CD4-positive, alpha-beta T cell (primary cell): ENCODE measurements at regions of chr22 and their contacts with region 1.

Region 1: GRCh38 chr22:24175160-24175808 is 6.0 kb upstream of the SUSD2 start:
- DNase-seq: peak; percentile 41 to 79 (median 61)
- ATAC-seq: peak; percentile 68
- H3K4me3 ChIP-seq: no peak overlapping the region
- H3K4me3 Mint-ChIP-seq: no peak overlapping the region
- H3K27ac ChIP-seq: peak overlapping the region in 1 of 2 donors; percentile 21
- H3K27ac Mint-ChIP-seq: no peak overlapping the region
- H3K4me1 ChIP-seq: no peaks in the 10 kb centered on the region
- H3K4me1 Mint-ChIP-seq: no peaks in the 10 kb centered on the region
- H3K27me3 ChIP-seq: no peaks in the 10 kb centered on the region
- H3K27me3 Mint-ChIP-seq: no peaks in the 10 kb centered on the region
- CTCF ChIP-seq: peak; percentile 71

Region 2: DNA sequence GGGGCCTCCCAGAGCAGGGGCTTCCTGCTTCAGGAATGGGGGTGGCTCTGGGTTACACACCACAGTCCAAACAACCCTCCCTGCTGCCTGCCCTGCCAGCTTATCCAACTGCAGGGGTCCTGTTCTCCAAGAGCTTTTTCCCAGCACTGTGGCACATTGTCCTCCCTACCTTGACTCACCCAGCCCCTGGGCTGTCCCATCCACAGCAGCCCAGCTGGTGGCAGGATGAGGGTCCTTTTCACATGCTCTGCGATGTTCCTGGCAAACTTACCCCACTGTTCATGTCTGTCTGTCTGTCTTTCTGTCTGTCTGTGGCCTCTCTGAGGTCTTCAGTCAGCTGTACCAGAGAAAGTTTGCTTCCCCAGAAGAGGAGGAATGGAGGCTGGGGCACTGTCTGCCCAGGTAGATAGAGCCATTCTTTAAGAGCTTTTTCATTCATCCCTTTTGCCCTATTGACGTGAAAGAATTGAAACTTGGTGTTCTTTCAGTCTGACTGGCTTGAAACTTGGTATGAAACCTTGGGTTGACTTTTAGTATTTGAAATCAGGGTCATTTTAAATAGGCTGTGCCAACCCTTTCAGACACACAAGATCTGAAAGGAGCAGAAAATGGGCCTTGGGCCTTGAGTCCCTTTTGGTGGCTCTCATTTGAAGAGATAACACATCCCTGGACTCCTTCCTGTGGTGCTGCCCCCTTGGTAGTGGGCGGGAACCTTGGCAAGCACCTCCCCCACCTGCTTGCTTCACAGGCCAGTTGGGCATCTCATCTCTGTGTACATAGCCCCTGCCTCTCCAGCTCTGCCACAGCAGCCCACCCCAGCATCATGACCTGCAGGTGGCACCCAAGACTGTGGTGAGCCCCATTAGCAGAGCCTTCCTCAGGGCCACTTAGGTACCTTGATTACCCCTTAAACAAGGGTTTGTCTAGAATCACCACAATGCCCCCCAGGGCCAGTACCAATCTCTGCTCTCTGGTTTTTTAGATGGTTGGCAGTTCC is 68.6 kb before region 1 on chr22:
- CTCF ChIA-PET with region 1: interaction called, 12 read pairs
- POLR2A ChIA-PET with region 1: no interaction called
- intact Hi-C with region 1: loop called in 1 of 2 experiments (anchors 1 kb)
- DNase-seq: peak in 13 of 14 experiments; percentile 15 to 65 (median 40)
- ATAC-seq: peak; percentile 56
- H3K4me3 ChIP-seq: no peak overlapping the region
- H3K4me3 Mint-ChIP-seq: no peak overlapping the region
- H3K27ac ChIP-seq: no peak overlapping the region
- H3K27ac Mint-ChIP-seq: no peak overlapping the region
- H3K4me1 ChIP-seq: peaks cover 4% of the 10 kb centered on the region
- H3K4me1 Mint-ChIP-seq: no peaks in the 10 kb centered on the region
- H3K27me3 ChIP-seq: no peaks in the 10 kb centered on the region
- H3K27me3 Mint-ChIP-seq: no peaks in the 10 kb centered on the region
- CTCF ChIP-seq: peak; percentile 46

Region 3: DNA sequence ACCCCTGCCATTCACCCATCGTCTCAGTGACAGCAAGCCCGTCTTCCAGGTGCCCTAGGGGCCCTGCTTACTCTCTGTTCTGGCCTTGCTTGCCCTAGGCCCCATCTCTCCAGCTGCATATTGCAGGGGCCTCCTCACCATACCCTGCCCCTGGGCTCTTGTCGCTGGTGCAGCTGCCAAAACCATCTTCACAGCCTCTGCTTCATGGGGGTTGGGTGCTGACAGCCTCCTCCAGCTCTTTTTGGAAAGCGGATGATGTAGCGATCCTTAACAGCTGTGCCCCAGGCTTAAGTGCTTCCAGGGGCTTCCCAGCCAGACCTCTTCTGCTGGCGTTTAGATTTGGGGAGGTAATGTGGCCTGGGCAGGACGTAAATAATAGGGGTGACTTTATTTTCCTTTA is 55.2 kb before region 1 on chr22:
- CTCF ChIA-PET with region 1: no interaction called
- POLR2A ChIA-PET with region 1: no interaction called
- intact Hi-C with region 1: no loop called
- DNase-seq: no peak
- ATAC-seq: no peak
- H3K4me3 ChIP-seq: no peak overlapping the region
- H3K4me3 Mint-ChIP-seq: no peak overlapping the region
- H3K27ac ChIP-seq: no peak overlapping the region
- H3K27ac Mint-ChIP-seq: no peak overlapping the region
- H3K4me1 ChIP-seq: no peaks in the 10 kb centered on the region
- H3K4me1 Mint-ChIP-seq: no peaks in the 10 kb centered on the region
- H3K27me3 ChIP-seq: no peaks in the 10 kb centered on the region
- H3K27me3 Mint-ChIP-seq: no peaks in the 10 kb centered on the region
- CTCF ChIP-seq: no peak

Region 4: GRCh38 chr22:24133187-24133965 is 41.9 kb before region 1 on chr22:
- CTCF ChIA-PET with region 1: interaction called, 25 read pairs
- POLR2A ChIA-PET with region 1: interaction called, 6 read pairs
- intact Hi-C with region 1: loop called (anchors 1 kb)
- DNase-seq: peak; percentile 30 to 73 (median 48)
- ATAC-seq: peak; percentile 50
- H3K4me3 ChIP-seq: no peak overlapping the region
- H3K4me3 Mint-ChIP-seq: no peak overlapping the region
- H3K27ac ChIP-seq: no peak overlapping the region
- H3K27ac Mint-ChIP-seq: peak overlapping the region; percentile 92
- H3K4me1 ChIP-seq: peaks cover 18% of the 10 kb centered on the region
- H3K4me1 Mint-ChIP-seq: peaks cover 23% of the 10 kb centered on the region
- H3K27me3 ChIP-seq: no peaks in the 10 kb centered on the region
- H3K27me3 Mint-ChIP-seq: no peaks in the 10 kb centered on the region
- CTCF ChIP-seq: peak; percentile 58

Region 5: DNA sequence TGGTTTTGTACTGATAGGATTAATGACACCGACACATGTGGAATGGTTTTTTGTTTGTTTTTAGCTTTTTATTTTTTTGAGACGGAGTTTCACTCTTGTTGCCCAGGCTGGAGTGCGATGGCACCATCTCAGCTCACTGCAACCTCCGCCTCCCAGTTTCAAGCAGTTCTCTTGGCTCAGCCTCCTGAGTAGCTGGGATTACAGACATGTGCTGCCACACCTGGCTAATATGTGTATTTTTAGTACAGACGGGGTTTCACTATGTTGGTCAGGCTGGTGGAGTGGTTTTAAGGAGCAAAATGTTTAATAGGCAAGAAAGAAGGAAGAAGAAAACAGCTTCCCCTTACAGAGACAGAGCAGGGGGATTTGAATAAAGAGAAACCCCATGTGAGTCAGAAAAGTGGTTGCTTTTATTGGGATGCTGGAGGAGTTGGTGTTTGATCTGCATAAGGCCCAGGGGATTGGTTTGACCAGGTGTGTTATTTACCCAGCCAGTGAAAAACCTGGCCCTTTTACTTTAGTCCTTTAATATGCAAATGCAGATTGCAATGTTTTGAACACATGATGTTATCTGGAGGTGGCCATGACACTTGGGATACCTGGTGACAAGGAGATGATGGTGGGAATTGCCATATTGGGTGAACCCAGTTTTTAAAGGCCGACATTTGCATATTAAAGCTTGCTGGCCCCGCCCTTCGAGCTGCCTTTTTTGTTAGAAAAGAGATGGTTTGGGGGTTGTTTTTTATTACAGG is 30.3 kb after region 1 on chr22:
- CTCF ChIA-PET with region 1: no interaction called
- POLR2A ChIA-PET with region 1: no interaction called
- intact Hi-C with region 1: no loop called
- DNase-seq: peak in 1 of 14 experiments; percentile 23
- ATAC-seq: no peak
- H3K4me3 ChIP-seq: no peak overlapping the region
- H3K4me3 Mint-ChIP-seq: no peak overlapping the region
- H3K27ac ChIP-seq: no peak overlapping the region
- H3K27ac Mint-ChIP-seq: no peak overlapping the region
- H3K4me1 ChIP-seq: peaks cover 15% of the 10 kb centered on the region
- H3K4me1 Mint-ChIP-seq: peaks cover 18% of the 10 kb centered on the region
- H3K27me3 ChIP-seq: no peaks in the 10 kb centered on the region
- H3K27me3 Mint-ChIP-seq: no peaks in the 10 kb centered on the region
- CTCF ChIP-seq: no peak